GM13976 (cell line): ENCODE measurements at regions of chr21 and their contacts with region 1.

Region 1: GRCh38 chr21:17903029-17903806 is 84.1 kb upstream of the C21orf91 start:
- DNase-seq: peak; percentile 53
- CTCF ChIP-seq: peak; percentile 8

Region 2: GRCh38 chr21:17679002-17679600 is 224.1 kb before region 1 on chr21:
- in situ Hi-C with region 1: loop called (anchors 10 kb)
- DNase-seq: peak; percentile 66
- CTCF ChIP-seq: peak; percentile 47